Gastrocnemius medialis (tissue), 4 donors: ENCODE measurements at regions of chr1 and their contacts with region 1.

Region 1: GRCh38 chr1:212284744-212285684 is at the start of gene PPP2R5A:
- DNase-seq: peak; percentile 99
- ATAC-seq: peak; percentile 83 to 87
- H3K4me3 ChIP-seq: peak within 1 kb of the TSS; percentile 81 to 91 (median 88)
- H3K27ac ChIP-seq: peak within 1 kb of the TSS; percentile 91 to 99 (median 98)
- H3K4me1 ChIP-seq: peaks cover 22 to 30% of the 10 kb centered on the region in 2 donors
- H3K27me3 ChIP-seq: no peaks in the 10 kb centered on the region
- CTCF ChIP-seq: peak in 3 of 5 experiments; percentile 22 to 41 (median 29)
- POLR2A ChIP-seq: peak; percentile 92 to 94
- total RNA-seq, gene PPP2R5A: 33.3 to 50.5 (median 37.5) TPM

Region 2: GRCh38 chr1:212035123-212035834 is 249.7 kb before region 1 on chr1 and contains the starts of genes DTL and INTS7:
- in situ Hi-C with region 1: no loop called
- intact Hi-C with region 1: loop called (anchors 1 kb)
- DNase-seq: peak; percentile 98 to 99
- ATAC-seq: peak; percentile 95 to 98
- H3K4me3 ChIP-seq: peak within 1 kb of the TSS; percentile 68 to 78 (median 74)
- H3K27ac ChIP-seq: peak within 1 kb of the TSS; percentile 80 to 91 (median 89)
- H3K4me1 ChIP-seq: peaks cover 15 to 20% of the 10 kb centered on the region in 2 donors
- H3K27me3 ChIP-seq: no peaks in the 10 kb centered on the region
- CTCF ChIP-seq: peak; percentile 78 to 97 (median 91)
- POLR2A ChIP-seq: no peak
- total RNA-seq, gene DTL: 0.52 to 1.8 TPM in 2 of 4 donors, not detected in the others
- total RNA-seq, gene INTS7: 4.0 to 8.0 (median 6.6) TPM

Region 3: GRCh38 chr1:212077051-212077450 is 208.0 kb before region 1 on chr1:
- in situ Hi-C with region 1: loop called in 2 of 4 experiments (anchors 5 kb)
- intact Hi-C with region 1: loop called (anchors 1 kb)
- DNase-seq: no peak
- ATAC-seq: peak; percentile 35 to 38
- H3K4me3 ChIP-seq: no peak overlapping the region
- H3K27ac ChIP-seq: peak overlapping the region; percentile 51 to 91 (median 72)
- H3K4me1 ChIP-seq: peaks cover 18 to 28% of the 10 kb centered on the region in 2 donors
- H3K27me3 ChIP-seq: no peaks in the 10 kb centered on the region
- CTCF ChIP-seq: no peak
- POLR2A ChIP-seq: no peak

Region 4: DNA sequence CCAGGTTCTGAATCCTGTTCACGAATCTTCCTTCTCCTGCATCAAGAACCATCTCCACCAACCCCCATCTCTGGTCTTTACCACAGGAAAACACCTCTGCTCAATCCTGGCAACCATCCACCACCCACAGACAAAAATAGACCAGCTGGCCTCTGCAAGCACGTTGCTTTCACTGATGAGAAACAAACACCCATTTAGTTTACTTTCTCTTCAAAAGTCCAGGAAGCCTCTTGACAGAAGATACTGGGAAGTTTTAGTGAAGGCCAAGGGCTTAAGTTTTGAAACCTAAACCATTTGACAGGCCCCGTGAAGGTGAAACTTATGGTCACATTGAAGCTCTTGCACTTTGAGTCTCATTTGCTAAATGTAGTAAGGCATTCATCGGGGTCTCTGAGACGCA is 122.4 kb before region 1 on chr1:
- in situ Hi-C with region 1: no loop called
- intact Hi-C with region 1: loop called (anchors 2 kb)
- DNase-seq: peak; percentile 61 to 67
- ATAC-seq: peak; percentile 73 to 76
- H3K4me3 ChIP-seq: no peak overlapping the region
- H3K27ac ChIP-seq: peak overlapping the region; percentile 68 to 84 (median 76)
- H3K4me1 ChIP-seq: peaks cover 9 to 41% of the 10 kb centered on the region in 2 donors
- H3K27me3 ChIP-seq: no peaks in the 10 kb centered on the region
- CTCF ChIP-seq: no peak
- POLR2A ChIP-seq: no peak

Region 5: GRCh38 chr1:212558693-212559480 is 273.9 kb after region 1 on chr1:
- in situ Hi-C with region 1: no loop called
- intact Hi-C with region 1: loop called (anchors 5 kb)
- DNase-seq: peak; percentile 76 to 92
- ATAC-seq: peak; percentile 91 to 92
- H3K4me3 ChIP-seq: peak overlapping the region; percentile 65 to 82 (median 76)
- H3K27ac ChIP-seq: peak overlapping the region; percentile 75 to 94 (median 90)
- H3K4me1 ChIP-seq: no peaks in the 10 kb centered on the region
- H3K27me3 ChIP-seq: no peaks in the 10 kb centered on the region
- CTCF ChIP-seq: no peak
- POLR2A ChIP-seq: peak; percentile 80 to 94

Region 6: DNA sequence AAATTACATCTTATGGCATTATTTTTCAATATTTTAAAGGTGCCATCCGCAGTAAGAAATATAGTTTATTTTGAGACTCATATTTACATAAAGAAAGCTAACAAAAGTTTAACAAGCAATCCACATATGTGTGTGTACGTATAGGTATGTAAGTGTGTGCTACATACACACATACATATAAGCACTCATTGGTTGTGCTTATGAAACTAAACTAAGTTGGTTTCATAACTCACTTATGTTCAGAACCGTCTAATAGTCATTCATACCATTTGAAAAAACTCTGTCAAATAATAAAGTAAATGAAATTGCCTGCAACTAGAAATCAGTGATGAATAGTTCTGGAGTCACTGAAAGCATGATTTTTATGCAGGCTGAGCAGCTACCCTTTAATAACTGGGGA is 520.8 kb after region 1 on chr1:
- in situ Hi-C with region 1: no loop called
- intact Hi-C with region 1: no loop called
- DNase-seq: no peak
- ATAC-seq: no peak
- H3K4me3 ChIP-seq: no peak overlapping the region
- H3K27ac ChIP-seq: no peak overlapping the region
- H3K4me1 ChIP-seq: no peaks in the 10 kb centered on the region
- H3K27me3 ChIP-seq: no peaks in the 10 kb centered on the region
- CTCF ChIP-seq: no peak
- POLR2A ChIP-seq: no peak

Region 7: GRCh38 chr1:213070406-213070805 is 785.4 kb after region 1 on chr1:
- in situ Hi-C with region 1: no loop called
- intact Hi-C with region 1: no loop called
- DNase-seq: no peak
- ATAC-seq: no peak
- H3K4me3 ChIP-seq: no peak overlapping the region
- H3K27ac ChIP-seq: no peak overlapping the region
- H3K4me1 ChIP-seq: no peaks in the 10 kb centered on the region
- H3K27me3 ChIP-seq: no peaks in the 10 kb centered on the region
- CTCF ChIP-seq: no peak
- POLR2A ChIP-seq: no peak